IMR-90 (cell line): ENCODE measurements at regions of chr1 and their contacts with region 1.

Region 1: GRCh38 chr1:151435160-151435559 is 24.1 kb downstream of the POGZ start:
- DNase-seq: peak; percentile 20
- ATAC-seq: peak; percentile 77
- H3K4me3 ChIP-seq: no peak overlapping the region
- H3K27ac ChIP-seq: peak overlapping the region; percentile 82; the same call in 1 of the 2 replicates
- H3K4me1 ChIP-seq: peaks cover 10% of the 10 kb centered on the region
- H3K27me3 ChIP-seq: no peaks in the 10 kb centered on the region
- CTCF ChIP-seq: no peak
- POLR2A ChIP-seq: no peak
- RAD21 ChIP-seq: no peak

Region 2: DNA sequence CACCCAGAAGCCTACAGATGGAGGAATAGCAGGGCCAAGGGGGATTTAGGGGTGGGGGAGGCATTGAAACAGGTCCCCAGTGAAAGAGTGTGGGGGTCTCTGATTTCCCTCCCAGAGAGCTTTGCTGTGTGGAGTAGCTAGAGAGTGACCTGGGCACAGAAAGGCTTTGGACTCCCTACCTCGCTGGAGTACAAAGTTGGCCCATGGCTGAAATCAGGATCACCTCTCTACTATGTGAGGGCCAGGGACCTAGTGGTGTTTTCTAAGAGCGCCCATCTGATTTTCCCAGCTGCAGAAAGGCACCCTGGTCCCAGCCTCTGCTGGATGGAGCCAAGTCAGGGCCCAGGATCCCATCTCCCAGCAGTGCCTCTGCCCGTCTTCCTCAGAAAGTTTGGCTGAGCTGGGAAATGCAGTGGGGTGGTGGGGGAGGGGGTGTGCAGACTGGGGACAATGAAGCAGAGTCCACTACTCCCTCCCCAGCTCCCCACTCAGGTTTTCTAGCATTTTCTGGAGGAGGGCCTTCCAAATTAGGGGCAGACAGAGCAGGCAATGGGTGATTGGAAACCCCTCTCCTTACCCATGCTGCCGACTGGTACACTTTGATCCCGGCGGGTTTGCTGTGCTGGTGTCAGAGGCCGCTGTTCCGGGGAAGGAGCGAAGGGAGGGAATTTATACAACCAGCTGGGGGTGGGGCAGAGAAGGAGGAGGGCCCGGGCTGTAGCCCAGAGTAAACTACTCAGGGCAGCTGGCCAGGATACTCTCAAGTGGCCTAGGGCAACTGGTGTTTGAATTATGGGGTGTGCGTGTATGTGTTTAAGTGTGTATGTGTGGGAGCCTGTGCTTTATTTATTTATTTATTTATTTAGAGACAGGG is 62.9 kb before region 1 on chr1 and contains the start of gene SELENBP1:
- CTCF ChIA-PET with region 1: no interaction called
- POLR2A ChIA-PET with region 1: interaction called, 10 read pairs
- dilution Hi-C with region 1: no loop called
- in situ Hi-C with region 1: no loop called
- intact Hi-C with region 1: no loop called
- DNase-seq: peak; percentile 71
- ATAC-seq: peak; percentile 92
- H3K4me3 ChIP-seq: peak within 1 kb of the TSS; percentile 50
- H3K27ac ChIP-seq: peak within 1 kb of the TSS; percentile 15
- H3K4me1 ChIP-seq: peaks cover 14% of the 10 kb centered on the region
- H3K27me3 ChIP-seq: no peaks in the 10 kb centered on the region
- CTCF ChIP-seq: no peak
- POLR2A ChIP-seq: no peak
- RAD21 ChIP-seq: no peak
- total RNA-seq, gene SELENBP1: 21.1 and 21.3 TPM in 2 replicates

Region 3: DNA sequence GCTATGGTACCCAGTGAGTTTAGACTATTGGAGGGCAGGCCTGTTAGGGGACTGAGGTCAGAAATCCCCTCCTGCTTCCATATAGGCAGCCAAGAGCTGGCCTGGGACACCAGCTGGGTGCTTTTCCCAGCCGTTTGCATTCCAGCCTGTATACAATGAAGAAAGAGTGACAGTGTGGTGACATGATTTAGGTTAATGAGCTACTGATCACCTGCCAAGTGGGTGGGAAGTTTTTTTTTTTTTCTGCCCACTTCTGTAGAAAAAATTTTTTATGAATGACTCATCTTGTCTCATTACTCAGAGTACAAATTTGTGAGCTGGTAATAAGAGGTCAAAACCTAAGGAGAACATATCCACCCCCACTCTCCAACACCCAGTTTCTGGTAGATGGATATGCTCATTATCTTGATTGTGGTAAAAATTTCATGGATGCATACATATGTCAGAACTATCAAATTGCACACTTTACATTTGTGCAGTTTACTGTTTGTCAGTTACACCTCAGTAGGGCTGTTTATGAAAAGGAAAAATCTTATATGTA is 59.7 kb after region 1 on chr1:
- CTCF ChIA-PET with region 1: no interaction called
- POLR2A ChIA-PET with region 1: no interaction called
- dilution Hi-C with region 1: no loop called
- in situ Hi-C with region 1: no loop called
- intact Hi-C with region 1: no loop called
- DNase-seq: peak; percentile 56
- ATAC-seq: peak; percentile 79
- H3K4me3 ChIP-seq: no peak overlapping the region
- H3K27ac ChIP-seq: no peak overlapping the region
- H3K4me1 ChIP-seq: peaks cover 3% of the 10 kb centered on the region
- H3K27me3 ChIP-seq: peaks cover 7% of the 10 kb centered on the region
- CTCF ChIP-seq: no peak
- POLR2A ChIP-seq: no peak
- RAD21 ChIP-seq: no peak